ENCODE measurements at regions of chr7 and their contacts with region 1.

Region 1: DNA sequence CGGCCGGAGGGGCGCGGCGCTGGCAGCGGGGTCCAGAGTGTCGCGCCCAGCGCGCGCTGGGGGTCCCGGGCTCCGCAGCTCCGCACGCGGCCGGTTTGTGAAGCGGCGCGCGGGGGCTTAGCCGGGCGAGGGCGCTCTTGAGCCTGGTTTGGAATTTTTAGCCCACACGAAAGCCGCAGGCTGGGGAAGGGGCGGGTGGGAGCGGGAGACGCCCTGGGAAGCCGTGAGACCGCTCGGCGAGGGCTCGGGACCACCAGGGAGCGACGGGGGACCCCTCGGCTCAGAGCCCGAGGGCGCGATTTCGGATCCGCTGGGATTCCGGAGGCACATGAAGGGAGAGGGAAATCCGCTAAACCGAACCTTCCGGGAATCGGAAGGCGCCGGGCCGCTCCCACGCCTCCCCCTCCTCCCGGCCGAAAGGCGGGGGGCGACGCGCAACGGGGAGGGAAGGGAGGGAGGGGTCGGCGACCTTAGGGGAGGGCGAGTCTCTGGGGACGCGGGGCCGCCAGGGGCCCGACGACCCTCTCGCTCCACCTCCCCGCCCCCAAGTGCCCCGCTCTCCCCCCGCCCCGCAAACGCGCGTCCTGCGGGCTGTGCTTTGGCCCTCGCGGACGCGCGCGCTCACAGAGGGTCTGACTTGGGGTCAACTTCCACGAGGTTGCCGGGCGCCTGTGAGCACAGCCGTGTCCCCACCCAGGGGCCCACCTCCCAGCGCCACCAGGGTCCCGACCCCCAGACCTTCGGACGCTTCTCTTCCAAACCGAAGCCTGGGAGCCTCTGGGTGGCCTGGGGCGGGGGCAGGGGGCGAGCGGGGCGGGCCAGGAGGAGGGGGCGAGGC is 5.1 kb upstream of the ELFN1 start:
- DNase-seq: peak; percentile 78
- ATAC-seq: peak; percentile 51

Region 2: GRCh38 chr7:1761097-1761496 is 96.2 kb after region 1 on chr7:
- intact Hi-C with region 1: loop called (anchors 2 kb)
- DNase-seq: no peak
- ATAC-seq: no peak

Region 3: DNA sequence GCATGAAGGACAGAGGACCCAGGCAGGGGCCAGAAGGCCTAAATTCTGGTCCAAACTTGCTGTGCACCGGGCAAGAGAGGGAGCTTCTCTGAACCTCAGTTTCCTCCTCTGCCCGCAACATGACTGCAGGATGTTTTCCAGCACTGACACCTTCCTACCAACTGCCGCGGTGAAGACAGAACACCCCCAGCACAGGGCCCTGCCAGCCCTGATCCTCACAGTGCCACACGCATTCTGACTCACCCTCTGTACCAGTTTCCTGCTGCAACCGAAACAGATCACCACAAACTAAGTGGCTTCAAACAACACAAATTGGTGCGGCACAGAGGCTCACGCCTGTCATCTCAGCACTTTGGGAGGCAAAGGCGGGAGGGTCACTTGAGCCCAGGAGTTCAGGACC is 549.7 kb after region 1 on chr7:
- intact Hi-C with region 1: loop called (anchors 5 kb)
- DNase-seq: peak; percentile 14
- ATAC-seq: peak; percentile 29